ENCODE measurements at regions of chr11 and their contacts with region 1.

Region 1: GRCh38 chr11:9972989-9973388 is 309.1 kb downstream of the SWAP70 start:
- DNase-seq: peak; percentile 60
- H3K4me3 Mint-ChIP-seq: no peak overlapping the region
- H3K27ac Mint-ChIP-seq: peak overlapping the region; percentile 8
- H3K4me1 Mint-ChIP-seq: peaks cover 6% of the 10 kb centered on the region
- H3K27me3 Mint-ChIP-seq: no peaks in the 10 kb centered on the region
- CTCF ChIP-seq: peak; percentile 76

Region 2: DNA sequence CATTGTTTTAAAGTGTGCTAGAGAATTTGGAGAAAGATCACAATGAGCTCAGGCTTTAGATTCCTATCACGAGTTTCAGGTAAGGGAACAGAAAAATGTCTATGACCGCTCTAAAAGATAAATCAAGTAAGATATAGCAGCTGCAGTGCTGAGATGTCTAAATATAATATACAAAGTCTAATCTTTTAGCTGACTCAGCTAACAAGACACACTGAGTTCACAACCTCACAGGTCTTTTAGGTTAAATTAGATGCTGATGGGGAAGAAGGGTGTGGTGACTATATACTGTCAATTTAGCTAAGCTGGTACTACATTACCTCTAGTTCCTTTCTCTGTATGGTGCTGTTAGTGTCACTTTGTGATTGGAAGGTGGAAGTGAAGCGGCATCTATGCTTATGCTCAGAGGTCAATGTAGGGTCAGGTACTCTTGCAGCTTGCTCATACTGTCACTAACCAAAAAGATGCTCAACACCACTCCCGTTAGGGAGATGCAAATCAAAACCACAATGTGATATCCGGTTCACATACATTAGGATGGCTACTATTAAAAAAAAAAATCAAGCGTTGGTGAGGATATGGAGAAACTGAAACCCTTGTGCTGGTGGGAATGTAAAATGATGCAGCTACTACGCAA is 25.6 kb before region 1 on chr11:
- CTCF ChIA-PET with region 1: interaction called, 11 read pairs
- POLR2A ChIA-PET with region 1: no interaction called
- intact Hi-C with region 1: no loop called
- DNase-seq: no peak
- H3K4me3 Mint-ChIP-seq: no peak overlapping the region
- H3K27ac Mint-ChIP-seq: no peak overlapping the region
- H3K4me1 Mint-ChIP-seq: peaks cover 18% of the 10 kb centered on the region
- H3K27me3 Mint-ChIP-seq: no peaks in the 10 kb centered on the region
- CTCF ChIP-seq: no peak

Region 3: GRCh38 chr11:9982800-9983579 is 10.0 kb after region 1 on chr11:
- CTCF ChIA-PET with region 1: interaction called, 36 read pairs
- POLR2A ChIA-PET with region 1: interaction called, 4 read pairs
- intact Hi-C with region 1: no loop called
- DNase-seq: peak; percentile 80
- H3K4me3 Mint-ChIP-seq: peak overlapping the region; percentile 55
- H3K27ac Mint-ChIP-seq: peak overlapping the region; percentile 91
- H3K4me1 Mint-ChIP-seq: peaks cover 25% of the 10 kb centered on the region
- H3K27me3 Mint-ChIP-seq: no peaks in the 10 kb centered on the region
- CTCF ChIP-seq: no peak

Region 4: GRCh38 chr11:10134975-10135481 is 162.0 kb after region 1 on chr11:
- CTCF ChIA-PET with region 1: no interaction called
- POLR2A ChIA-PET with region 1: no interaction called
- intact Hi-C with region 1: no loop called
- DNase-seq: no peak
- H3K4me3 Mint-ChIP-seq: no peak overlapping the region
- H3K27ac Mint-ChIP-seq: no peak overlapping the region
- H3K4me1 Mint-ChIP-seq: peaks cover 9% of the 10 kb centered on the region
- H3K27me3 Mint-ChIP-seq: no peaks in the 10 kb centered on the region
- CTCF ChIP-seq: no peak